Astrocyte of the cerebellum (primary cell): ENCODE measurements at regions of chr2 and their contacts with region 1.

Region 1: DNA sequence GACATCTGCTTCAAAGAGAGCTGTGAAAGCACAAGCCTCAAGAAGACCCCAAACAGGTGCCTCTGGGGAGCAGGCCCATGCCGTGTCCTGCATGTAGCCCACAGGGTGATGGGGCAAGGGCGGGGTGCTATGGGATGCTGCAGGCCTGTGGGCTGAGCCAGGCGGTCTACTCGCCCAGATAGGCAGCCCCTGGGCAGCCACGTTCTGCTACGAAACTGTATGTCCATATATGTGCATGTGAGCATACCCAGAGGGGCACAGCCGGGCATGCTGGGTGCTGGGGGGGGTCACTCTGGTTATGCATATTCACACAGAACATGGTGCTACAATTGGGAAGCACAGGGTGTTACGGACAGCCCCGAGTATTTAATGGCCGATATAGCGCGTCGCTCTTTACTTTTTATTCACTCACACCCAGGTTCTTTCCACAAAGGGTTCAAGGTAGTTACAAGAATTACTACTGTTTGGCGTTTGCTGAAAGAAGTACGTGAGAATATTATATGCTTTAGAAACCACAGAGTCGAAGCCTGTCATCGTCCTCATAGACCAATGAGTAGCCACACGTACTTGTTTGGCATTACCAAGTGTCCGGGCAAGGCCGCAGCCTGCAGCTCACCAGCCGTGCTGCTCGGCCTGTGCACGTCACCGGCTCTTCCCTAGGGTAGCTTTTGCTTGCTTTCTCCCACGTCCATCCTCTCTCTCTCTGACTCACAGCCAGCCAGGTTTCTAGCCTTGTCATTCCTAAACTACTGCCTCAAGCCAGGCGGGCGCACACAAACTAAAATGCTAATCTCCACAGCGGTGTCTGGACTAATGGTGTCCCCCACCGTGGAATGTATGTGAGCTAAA is 14.4 kb downstream of the MTERF4 start:
- DNase-seq: no peak
- H3K4me3 ChIP-seq: no peak overlapping the region
- CTCF ChIP-seq: no peak

Region 2: DNA sequence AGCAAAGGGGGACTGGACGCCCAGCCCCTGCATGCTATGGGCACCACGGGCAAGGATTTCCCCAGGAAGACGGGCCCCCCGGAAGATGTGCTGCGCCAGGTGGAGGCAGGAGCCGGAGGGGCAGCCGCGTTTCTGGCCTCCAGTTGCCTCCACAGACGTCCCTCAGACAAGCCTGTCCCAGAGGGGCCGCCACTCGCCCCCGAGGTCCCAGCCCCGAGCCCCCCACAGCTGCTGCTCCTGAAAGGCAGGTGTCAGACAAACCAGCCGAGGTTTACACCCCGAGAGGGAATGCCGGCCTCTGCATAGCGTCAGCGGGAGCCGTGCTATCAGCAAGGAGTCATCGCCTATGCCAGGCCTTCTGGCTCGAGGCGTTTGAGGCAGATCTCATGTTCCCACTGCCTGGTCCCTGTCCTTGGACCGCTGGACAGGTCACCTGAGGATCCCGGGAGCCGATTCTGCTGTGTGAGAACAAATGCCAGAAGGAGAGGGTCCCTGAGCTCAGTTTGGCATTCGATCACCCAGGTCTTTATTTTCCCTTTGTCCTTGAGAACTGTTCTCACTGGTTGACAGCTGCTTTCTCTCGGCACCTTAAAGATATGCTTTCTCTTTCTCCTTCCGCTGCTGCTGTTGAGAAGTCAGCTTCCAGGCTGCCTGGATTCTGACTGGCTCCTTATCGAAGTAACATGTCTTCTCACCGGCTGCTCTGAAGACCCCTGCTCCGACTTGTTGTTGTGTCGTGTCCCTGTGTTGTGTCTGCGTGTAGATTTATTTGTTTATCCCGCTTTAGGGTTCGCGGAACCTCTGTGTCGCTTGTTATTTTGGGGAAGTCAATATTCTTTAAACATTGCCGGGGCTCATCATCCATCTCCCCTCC is 160.9 kb before region 1 on chr2:
- in situ Hi-C with region 1: loop called (anchors 25 kb)
- DNase-seq: no peak
- H3K4me3 ChIP-seq: no peak overlapping the region
- CTCF ChIP-seq: no peak